IMR-90 (cell line): ENCODE measurements at regions of chr5 and their contacts with region 1.

Region 1: DNA sequence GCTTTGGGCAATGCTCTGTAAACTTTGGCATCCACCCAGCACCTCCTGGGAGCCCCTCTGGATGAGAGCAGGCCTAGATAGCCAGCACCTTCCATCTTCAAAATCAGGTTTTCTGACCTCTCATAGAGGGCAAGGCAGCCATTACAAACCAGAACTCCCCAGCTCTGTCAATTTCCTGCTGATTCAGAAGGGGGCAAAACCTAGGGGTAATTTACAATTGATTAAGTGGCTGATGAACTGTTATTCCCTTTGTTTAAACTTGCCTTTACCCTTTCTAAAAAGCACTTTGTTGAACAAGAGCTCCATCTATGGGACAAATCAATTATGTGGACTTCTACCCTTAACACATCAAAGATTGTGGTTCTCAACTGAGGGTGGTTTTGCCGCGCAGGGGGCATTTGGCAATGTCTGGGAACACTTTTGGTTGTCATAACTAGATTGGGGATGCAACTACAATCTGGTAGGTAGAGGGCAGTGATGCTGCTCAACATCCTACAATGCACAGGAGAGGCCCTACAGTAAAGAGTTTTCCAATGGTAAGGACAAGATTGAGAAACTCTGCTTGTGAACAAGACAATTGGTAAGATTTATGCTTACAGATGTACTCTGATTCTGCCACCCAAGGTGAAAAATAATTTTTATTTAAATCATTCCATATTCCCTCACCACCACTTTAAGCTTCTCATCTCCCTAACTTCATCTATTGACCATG is 184.1 kb downstream of the MARCHF11 start:
- DNase-seq: peak; percentile 55
- ATAC-seq: peak; percentile 86
- H3K4me3 ChIP-seq: no peak overlapping the region
- H3K27ac ChIP-seq: no peak overlapping the region
- H3K4me1 ChIP-seq: no peaks in the 10 kb centered on the region; the same call in 1 of the 2 replicates
- H3K27me3 ChIP-seq: peaks cover 7% of the 10 kb centered on the region; the same call in 1 of the 2 replicates
- CTCF ChIP-seq: peak; percentile 75
- POLR2A ChIP-seq: no peak
- RAD21 ChIP-seq: peak; percentile 86

Region 2: DNA sequence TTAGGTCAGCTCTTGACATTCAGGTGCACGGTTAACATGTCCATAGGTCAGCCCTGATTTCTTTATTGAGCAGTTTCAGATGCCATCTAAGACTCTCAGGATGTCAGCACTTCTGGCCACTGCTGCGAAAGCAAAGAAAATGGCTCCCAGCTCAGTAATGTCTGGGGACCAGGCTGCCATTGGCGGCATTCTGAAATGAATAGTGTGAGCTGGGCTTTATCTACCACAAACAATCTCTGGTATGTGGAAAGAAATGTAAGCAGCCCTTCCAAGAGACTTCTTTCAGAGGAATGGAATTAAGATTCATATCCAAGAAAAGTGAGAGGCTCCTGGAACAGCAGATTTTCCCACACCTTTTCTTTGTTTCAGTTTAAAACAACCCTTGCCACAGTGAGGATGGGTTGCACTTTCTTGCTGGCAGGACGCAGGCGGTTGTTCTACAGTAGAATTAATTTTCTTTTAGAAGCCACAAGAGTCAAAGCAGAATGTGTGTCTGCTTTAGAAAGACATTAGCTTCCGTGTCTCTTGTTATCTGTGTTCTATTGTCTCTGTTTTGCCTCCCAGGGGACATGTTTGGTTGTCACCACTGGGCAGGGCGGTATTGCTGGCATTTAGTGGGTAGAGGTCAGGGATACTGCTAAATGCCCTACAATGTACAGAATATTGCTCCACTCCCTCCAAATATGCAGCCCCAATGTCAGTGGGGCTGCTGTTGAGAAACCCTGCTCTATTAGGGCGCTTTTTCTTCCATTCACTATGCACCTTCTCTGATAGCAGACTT is 974.0 kb before region 1 on chr5:
- CTCF ChIA-PET with region 1: interaction called, 3 read pairs
- POLR2A ChIA-PET with region 1: no interaction called
- dilution Hi-C with region 1: no loop called
- in situ Hi-C with region 1: no loop called
- intact Hi-C with region 1: loop called (anchors 5 kb)
- DNase-seq: peak; percentile 80
- ATAC-seq: peak; percentile 89
- H3K4me3 ChIP-seq: no peak overlapping the region
- H3K27ac ChIP-seq: peak overlapping the region; percentile 82
- H3K4me1 ChIP-seq: peaks cover 10% of the 10 kb centered on the region
- H3K27me3 ChIP-seq: no peaks in the 10 kb centered on the region
- CTCF ChIP-seq: no peak
- POLR2A ChIP-seq: no peak
- RAD21 ChIP-seq: no peak

Region 3: DNA sequence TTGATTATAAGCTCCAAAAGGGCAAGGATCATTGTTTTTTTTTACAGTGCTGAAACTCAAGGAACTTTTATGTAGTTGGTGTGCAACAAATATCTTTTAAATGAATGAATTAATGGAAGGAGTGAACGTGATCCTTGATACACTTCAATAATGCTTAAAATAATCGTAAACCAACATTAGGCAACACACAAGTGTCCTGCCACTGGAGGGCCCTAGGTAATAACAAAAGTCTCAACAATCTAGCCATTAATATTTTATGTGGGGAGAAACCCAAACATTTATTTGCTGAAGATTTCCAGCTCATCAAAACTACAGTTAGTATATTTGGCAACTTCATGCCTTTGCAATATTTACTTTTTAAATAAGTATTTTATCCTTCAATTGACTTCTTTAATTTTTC is 804.5 kb before region 1 on chr5:
- CTCF ChIA-PET with region 1: no interaction called
- POLR2A ChIA-PET with region 1: no interaction called
- dilution Hi-C with region 1: no loop called
- in situ Hi-C with region 1: no loop called
- intact Hi-C with region 1: loop called (anchors 10 kb)
- DNase-seq: no peak
- ATAC-seq: no peak
- H3K4me3 ChIP-seq: no peak overlapping the region
- H3K27ac ChIP-seq: no peak overlapping the region
- H3K4me1 ChIP-seq: no peaks in the 10 kb centered on the region
- H3K27me3 ChIP-seq: no peaks in the 10 kb centered on the region; the same call in 1 of the 2 replicates
- CTCF ChIP-seq: no peak
- POLR2A ChIP-seq: no peak
- RAD21 ChIP-seq: peak; percentile 17; the same call in 1 of the 2 replicates

Region 4: GRCh38 chr5:15463231-15463980 is 532.1 kb before region 1 on chr5:
- CTCF ChIA-PET with region 1: no interaction called
- POLR2A ChIA-PET with region 1: no interaction called
- dilution Hi-C with region 1: no loop called
- in situ Hi-C with region 1: loop called (anchors 10 kb)
- intact Hi-C with region 1: loop called (anchors 1 kb)
- DNase-seq: peak; percentile 33
- ATAC-seq: peak; percentile 35; the same call in 1 of the 2 replicates
- H3K4me3 ChIP-seq: no peak overlapping the region
- H3K27ac ChIP-seq: no peak overlapping the region
- H3K4me1 ChIP-seq: no peaks in the 10 kb centered on the region
- H3K27me3 ChIP-seq: peaks cover 1% of the 10 kb centered on the region; the same call in 1 of the 2 replicates
- CTCF ChIP-seq: peak; percentile 72
- POLR2A ChIP-seq: no peak
- RAD21 ChIP-seq: peak; percentile 83

Region 5: DNA sequence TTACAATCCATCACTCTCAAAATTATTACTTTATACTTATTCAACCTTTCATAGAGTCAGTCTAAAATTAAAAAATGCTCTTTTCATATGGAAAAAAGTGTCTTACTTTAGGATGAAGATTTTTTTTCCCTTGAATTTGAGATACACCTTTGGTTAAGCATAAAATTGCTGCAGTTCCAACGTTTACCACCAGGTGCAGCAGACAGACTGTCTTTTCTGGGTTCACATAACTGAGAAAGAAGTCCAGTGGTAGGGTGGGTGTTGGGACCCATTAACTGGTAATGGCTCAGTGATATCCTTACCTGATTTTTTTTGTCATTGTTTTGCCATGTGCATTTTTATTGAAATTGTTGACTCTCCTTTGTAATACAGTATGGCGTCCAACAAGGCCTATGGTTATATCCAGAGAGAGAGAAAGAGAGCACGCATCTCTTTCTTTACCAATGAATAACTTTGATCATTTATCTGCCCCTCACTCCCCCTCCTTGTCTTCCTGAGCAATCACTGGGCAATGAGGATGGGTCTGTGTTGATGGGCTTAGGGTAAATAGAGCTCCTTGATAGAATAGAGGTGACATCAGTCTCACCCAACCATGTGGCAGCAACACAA is 397.1 kb before region 1 on chr5:
- CTCF ChIA-PET with region 1: no interaction called
- POLR2A ChIA-PET with region 1: no interaction called
- dilution Hi-C with region 1: no loop called
- in situ Hi-C with region 1: no loop called
- intact Hi-C with region 1: loop called (anchors 10 kb)
- DNase-seq: no peak
- ATAC-seq: no peak
- H3K4me3 ChIP-seq: no peak overlapping the region
- H3K27ac ChIP-seq: no peak overlapping the region
- H3K4me1 ChIP-seq: no peaks in the 10 kb centered on the region
- H3K27me3 ChIP-seq: no peaks in the 10 kb centered on the region
- CTCF ChIP-seq: peak; percentile 35; the same call in 1 of the 2 replicates
- POLR2A ChIP-seq: no peak
- RAD21 ChIP-seq: peak; percentile 26; the same call in 1 of the 2 replicates

Region 6: DNA sequence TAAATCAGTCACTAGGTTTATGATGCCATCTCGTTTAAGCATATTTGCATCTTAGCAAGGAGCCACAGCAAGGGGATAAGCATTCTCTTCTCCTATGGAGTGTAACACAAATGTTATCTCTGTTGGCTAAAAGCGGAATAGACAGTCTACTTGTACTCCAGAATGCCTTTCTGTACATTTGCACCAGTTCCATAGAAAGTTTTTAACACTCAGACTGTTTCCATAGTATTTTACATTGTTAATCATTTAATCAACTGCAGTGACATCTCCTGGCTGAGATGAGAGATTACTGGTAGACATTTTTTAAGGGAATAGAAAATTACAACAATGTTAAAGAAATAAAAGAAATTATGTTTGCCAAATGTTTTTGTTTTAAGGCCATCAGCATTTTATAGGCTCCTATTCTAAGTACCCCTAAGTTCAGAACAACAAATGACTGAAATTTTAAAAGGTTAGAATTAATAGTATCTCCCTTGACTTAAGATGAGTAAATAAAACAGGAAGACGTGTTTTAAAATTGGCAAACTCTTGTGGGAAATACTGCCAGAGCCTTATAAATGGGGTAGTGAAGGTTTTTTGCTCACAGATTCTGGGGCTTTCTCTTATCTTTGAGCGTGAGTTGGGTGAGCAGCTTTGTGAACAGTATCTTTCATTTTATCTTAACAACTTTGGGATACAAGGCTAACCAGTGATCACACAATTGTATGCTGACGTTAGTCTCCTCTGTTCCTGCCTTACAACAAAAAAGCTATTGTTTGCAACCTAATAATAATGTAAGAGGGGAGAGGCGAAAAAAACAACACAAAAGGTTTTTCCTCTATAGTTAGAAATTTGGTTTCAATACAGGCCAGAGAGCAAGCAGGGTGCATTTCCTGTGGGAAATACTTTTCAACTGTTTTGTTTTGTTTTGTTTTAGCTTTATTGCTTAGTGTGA is 201.2 kb before region 1 on chr5:
- CTCF ChIA-PET with region 1: no interaction called
- POLR2A ChIA-PET with region 1: no interaction called
- dilution Hi-C with region 1: no loop called
- in situ Hi-C with region 1: no loop called
- intact Hi-C with region 1: loop called (anchors 1 kb)
- DNase-seq: peak; percentile 24
- ATAC-seq: no peak
- H3K4me3 ChIP-seq: no peak overlapping the region
- H3K27ac ChIP-seq: no peak overlapping the region
- H3K4me1 ChIP-seq: peaks cover 3% of the 10 kb centered on the region
- H3K27me3 ChIP-seq: no peaks in the 10 kb centered on the region
- CTCF ChIP-seq: peak; percentile 44
- POLR2A ChIP-seq: no peak
- RAD21 ChIP-seq: peak; percentile 45

Region 7: DNA sequence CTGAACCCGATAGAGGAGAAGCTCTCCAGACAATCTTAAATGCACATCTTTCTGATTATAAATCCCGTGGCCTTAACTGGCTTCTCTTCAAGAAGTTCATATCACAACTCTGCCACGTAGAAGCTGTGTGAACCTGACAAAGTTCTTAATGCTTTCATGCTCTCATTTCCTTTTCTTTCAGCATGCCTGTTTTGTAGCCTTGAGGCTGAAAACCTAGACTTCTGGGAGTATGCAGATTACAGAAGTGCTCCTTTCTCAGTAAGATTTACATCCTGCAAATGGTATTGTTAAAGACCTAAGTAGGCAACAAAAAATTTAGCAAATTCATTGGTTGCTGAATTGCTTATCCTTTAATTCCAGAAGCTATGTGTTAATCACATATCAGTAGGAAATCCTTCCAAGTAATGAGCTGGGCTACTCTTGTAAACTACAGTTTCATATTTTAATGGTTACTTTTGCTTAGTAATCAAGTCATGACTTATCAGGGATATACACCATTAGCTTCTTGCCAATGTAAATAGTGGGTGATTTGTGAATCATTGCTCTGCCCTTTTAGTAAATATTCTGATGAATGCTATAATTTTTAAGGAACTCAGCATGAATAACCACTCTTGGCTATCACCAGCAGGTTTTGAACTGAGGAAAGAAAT is 160.8 kb before region 1 on chr5:
- CTCF ChIA-PET with region 1: interaction called, 4 read pairs
- POLR2A ChIA-PET with region 1: no interaction called
- dilution Hi-C with region 1: no loop called
- in situ Hi-C with region 1: no loop called
- intact Hi-C with region 1: loop called (anchors 5 kb)
- DNase-seq: peak; percentile 91
- ATAC-seq: peak; percentile 85
- H3K4me3 ChIP-seq: no peak overlapping the region
- H3K27ac ChIP-seq: peak overlapping the region; percentile 37; the same call in 1 of the 2 replicates
- H3K4me1 ChIP-seq: peaks cover 7% of the 10 kb centered on the region
- H3K27me3 ChIP-seq: no peaks in the 10 kb centered on the region
- CTCF ChIP-seq: no peak
- POLR2A ChIP-seq: no peak
- RAD21 ChIP-seq: no peak

Region 8: GRCh38 chr5:16245249-16245648 is 249.8 kb after region 1 on chr5:
- CTCF ChIA-PET with region 1: no interaction called
- POLR2A ChIA-PET with region 1: no interaction called
- dilution Hi-C with region 1: no loop called
- in situ Hi-C with region 1: no loop called
- intact Hi-C with region 1: no loop called
- DNase-seq: no peak
- ATAC-seq: no peak
- H3K4me3 ChIP-seq: no peak overlapping the region
- H3K27ac ChIP-seq: no peak overlapping the region
- H3K4me1 ChIP-seq: no peaks in the 10 kb centered on the region
- H3K27me3 ChIP-seq: no peaks in the 10 kb centered on the region
- CTCF ChIP-seq: no peak
- POLR2A ChIP-seq: no peak
- RAD21 ChIP-seq: no peak

Region 9: DNA sequence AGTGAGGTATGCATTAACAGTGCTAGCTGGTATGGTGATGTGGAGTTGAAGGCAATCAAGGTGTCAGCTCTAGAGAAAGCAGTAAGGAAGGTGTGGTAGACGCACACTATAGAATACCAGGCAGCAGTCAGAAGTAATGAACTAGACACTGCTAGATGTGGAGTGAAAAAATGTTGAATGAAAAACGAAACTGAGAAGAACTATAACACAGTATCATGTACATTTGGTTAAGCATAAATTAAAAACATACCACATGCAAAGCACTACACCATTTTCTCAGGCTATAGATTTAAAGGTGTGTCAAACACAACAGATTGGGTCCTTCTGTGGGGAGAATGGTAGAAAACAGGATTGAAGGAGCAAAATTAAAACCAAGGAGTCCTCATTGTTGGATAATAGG is 454.7 kb after region 1 on chr5:
- CTCF ChIA-PET with region 1: no interaction called
- POLR2A ChIA-PET with region 1: no interaction called
- dilution Hi-C with region 1: no loop called
- in situ Hi-C with region 1: no loop called
- intact Hi-C with region 1: no loop called
- DNase-seq: no peak
- ATAC-seq: no peak
- H3K4me3 ChIP-seq: no peak overlapping the region
- H3K27ac ChIP-seq: no peak overlapping the region
- H3K4me1 ChIP-seq: no peaks in the 10 kb centered on the region
- H3K27me3 ChIP-seq: no peaks in the 10 kb centered on the region
- CTCF ChIP-seq: no peak
- POLR2A ChIP-seq: no peak
- RAD21 ChIP-seq: no peak